Calu3 (cell line): ENCODE measurements at regions of chr16 and their contacts with region 1.

Region 1: GRCh38 chr16:88437373-88437964 is 15.6 kb upstream of the ZFPM1 start:
- DNase-seq: peak; percentile 87
- H3K4me3 Mint-ChIP-seq: no peak overlapping the region
- H3K27ac Mint-ChIP-seq: no peak overlapping the region
- H3K4me1 Mint-ChIP-seq: no peaks in the 10 kb centered on the region
- H3K27me3 Mint-ChIP-seq: peaks cover 77% of the 10 kb centered on the region
- CTCF ChIP-seq: peak; percentile 95

Region 2: GRCh38 chr16:88194397-88195268 is 242.8 kb before region 1 on chr16:
- CTCF ChIA-PET with region 1: no interaction called
- intact Hi-C with region 1: loop called (anchors 2 kb)
- DNase-seq: no peak
- H3K4me3 Mint-ChIP-seq: no peak overlapping the region
- H3K27ac Mint-ChIP-seq: no peak overlapping the region
- H3K4me1 Mint-ChIP-seq: no peaks in the 10 kb centered on the region
- H3K27me3 Mint-ChIP-seq: peaks cover 36% of the 10 kb centered on the region
- CTCF ChIP-seq: no peak

Region 3: DNA sequence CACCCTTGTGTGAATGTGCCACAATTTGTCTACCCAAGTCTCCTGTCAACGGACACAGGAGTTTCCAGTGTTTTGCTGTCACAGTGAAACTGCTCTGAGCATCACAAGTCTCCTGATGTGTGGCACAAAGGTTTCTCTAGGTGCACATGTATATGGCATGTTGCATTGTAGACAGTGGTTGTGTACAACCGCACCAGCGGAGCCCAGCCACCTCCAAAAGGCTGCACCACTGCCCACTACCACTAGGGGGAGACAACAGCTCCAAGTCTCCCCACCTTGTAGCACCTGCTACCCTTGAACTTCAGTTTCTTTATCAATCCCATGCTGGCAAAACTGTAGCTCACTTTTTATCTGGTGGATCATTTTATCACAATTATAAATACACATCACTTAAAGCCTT is 150.2 kb before region 1 on chr16:
- CTCF ChIA-PET with region 1: interaction called, 26 read pairs
- intact Hi-C with region 1: loop called (anchors 5 kb)
- DNase-seq: peak; percentile 86
- H3K4me3 Mint-ChIP-seq: no peak overlapping the region
- H3K27ac Mint-ChIP-seq: no peak overlapping the region
- H3K4me1 Mint-ChIP-seq: peaks cover 11% of the 10 kb centered on the region
- H3K27me3 Mint-ChIP-seq: no peaks in the 10 kb centered on the region
- CTCF ChIP-seq: peak; percentile 98